ENCODE measurements at regions of chr11 and their contacts with region 1.

Region 1: DNA sequence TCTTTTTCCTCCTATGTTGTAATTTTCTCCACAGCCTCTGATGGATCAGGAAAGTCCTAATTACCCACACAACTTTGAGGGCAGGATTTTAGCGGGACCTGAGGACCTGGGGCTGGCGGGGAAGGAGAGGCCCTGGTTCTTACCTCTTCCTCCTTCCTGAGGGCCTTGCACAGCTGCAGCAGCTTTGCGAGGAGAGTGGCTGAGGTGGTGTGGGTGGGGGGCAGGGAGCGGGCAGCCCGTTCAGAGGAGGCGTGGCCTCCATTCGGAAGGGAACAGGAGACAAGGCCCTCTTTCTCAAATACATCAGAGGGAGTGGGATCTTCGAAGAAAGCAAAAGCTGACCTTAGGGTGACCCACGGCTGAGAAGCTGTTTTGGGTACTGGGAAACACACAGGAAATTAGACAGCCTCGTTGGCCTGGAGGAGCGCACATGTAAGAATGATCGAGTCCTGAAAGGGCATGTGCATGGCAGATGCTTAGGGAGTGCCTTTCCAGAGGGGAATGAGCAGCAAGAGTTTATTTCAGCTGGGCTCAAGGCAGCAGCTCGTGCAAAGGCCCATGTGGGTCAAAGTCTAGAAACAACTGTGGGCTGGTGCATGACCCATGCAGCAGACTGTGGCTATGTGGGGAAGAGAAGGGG is 76.6 kb upstream of the NARS2 start:
- DNase-seq: no peak
- ATAC-seq: no peak
- H3K4me3 ChIP-seq: no peak overlapping the region
- H3K27ac ChIP-seq: no peak overlapping the region
- H3K4me1 ChIP-seq: no peaks in the 10 kb centered on the region
- H3K27me3 ChIP-seq: peaks cover 13% of the 10 kb centered on the region
- CTCF ChIP-seq: no peak
- POLR2A ChIP-seq: no peak
- RAD21 ChIP-seq: no peak

Region 2: DNA sequence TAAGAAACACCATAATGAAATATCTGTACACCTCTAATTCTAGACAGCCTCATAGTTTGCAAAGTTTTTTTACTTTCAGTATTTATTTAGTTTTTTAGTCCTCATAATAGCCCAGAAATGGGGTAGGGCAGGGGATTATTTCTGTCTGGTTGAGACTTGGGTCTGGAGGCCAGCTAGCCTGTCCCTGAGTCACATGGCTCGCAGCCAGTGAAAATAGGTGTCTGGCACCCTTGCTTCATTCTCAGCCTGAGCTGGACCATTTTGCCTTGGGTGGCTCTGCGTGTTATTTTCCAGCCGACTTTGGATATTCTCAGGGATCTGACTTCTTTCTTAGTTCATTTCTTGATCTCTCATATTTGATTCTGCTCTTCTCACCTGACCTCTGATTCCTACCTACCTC is 47.4 kb after region 1 on chr11:
- CTCF ChIA-PET with region 1: no interaction called
- POLR2A ChIA-PET with region 1: no interaction called
- RAD21 ChIA-PET with region 1: no interaction called
- intact Hi-C with region 1: no loop called
- DNase-seq: no peak
- ATAC-seq: no peak
- H3K4me3 ChIP-seq: no peak overlapping the region
- H3K27ac ChIP-seq: no peak overlapping the region
- H3K4me1 ChIP-seq: no peaks in the 10 kb centered on the region
- H3K27me3 ChIP-seq: peaks cover 48% of the 10 kb centered on the region
- CTCF ChIP-seq: no peak
- POLR2A ChIP-seq: no peak
- RAD21 ChIP-seq: no peak

Region 3: DNA sequence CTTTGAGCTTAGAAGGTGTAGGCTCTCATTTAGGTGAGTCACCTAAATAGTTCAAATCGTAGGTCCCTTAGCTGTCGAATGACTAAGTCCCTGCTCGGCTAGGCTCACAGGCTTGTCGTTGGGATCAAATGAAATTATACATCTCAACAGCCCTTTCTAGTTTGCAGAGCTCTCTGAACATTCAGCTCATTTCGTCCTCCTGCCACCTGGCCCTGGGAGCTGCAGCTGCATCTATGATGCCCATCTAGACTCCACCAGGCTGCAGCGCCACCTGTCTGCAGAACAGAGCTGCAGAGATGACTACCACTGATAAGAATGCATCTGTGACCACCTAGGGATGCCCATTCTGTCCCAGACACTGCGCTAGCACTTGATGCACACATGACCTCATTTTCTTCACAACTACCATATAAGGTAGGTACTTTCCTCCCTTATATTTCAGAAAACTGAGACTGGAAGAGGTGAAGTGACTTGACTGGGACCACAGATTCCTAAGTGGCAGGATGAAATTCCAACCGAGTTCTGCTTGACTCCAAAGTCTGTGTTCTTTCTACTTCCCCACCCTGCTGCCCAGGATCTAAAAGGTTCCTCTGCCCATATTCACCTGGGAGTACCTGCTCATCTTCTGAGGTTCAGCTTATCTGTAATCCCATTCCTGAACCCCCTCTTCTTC is 64.5 kb after region 1 on chr11:
- CTCF ChIA-PET with region 1: interaction called, 158 read pairs
- POLR2A ChIA-PET with region 1: no interaction called
- RAD21 ChIA-PET with region 1: interaction called, 10 to 24 read pairs
- intact Hi-C with region 1: loop called (anchors 1 kb)
- DNase-seq: peak; percentile 73
- ATAC-seq: peak; percentile 95
- H3K4me3 ChIP-seq: no peak overlapping the region
- H3K27ac ChIP-seq: no peak overlapping the region
- H3K4me1 ChIP-seq: peaks cover 10 to 18% of the 10 kb centered on the region in 2 experiments
- H3K27me3 ChIP-seq: peaks cover 11% of the 10 kb centered on the region; the same call in 1 of the 2 replicates
- CTCF ChIP-seq: peak; percentile 82 to 94 (median 93)
- POLR2A ChIP-seq: no peak
- RAD21 ChIP-seq: peak; percentile 77

Region 4: GRCh38 chr11:79026803-79027445 is 375.7 kb after region 1 on chr11:
- CTCF ChIA-PET with region 1: no interaction called
- POLR2A ChIA-PET with region 1: no interaction called
- RAD21 ChIA-PET with region 1: no interaction called
- intact Hi-C with region 1: no loop called
- DNase-seq: no peak
- ATAC-seq: no peak
- H3K4me3 ChIP-seq: no peak overlapping the region
- H3K27ac ChIP-seq: no peak overlapping the region
- H3K4me1 ChIP-seq: no peaks in the 10 kb centered on the region
- H3K27me3 ChIP-seq: peaks cover 52% of the 10 kb centered on the region
- CTCF ChIP-seq: no peak
- POLR2A ChIP-seq: no peak
- RAD21 ChIP-seq: no peak

Measured in HCT116 (cell line).